Mammary epithelial cell (primary cell): ENCODE measurements at regions of chr2 and their contacts with region 1.

Region 1: GRCh38 chr2:19911799-19912509 is 10.2 kb upstream of the TTC32 start:
- DNase-seq: peak; percentile 98
- H3K4me3 ChIP-seq: no peak overlapping the region
- H3K27ac ChIP-seq: peak overlapping the region; percentile 92
- H3K4me1 ChIP-seq: peaks cover 24% of the 10 kb centered on the region
- H3K27me3 ChIP-seq: no peaks in the 10 kb centered on the region
- CTCF ChIP-seq: no peak

Region 2: GRCh38 chr2:19187323-19188020 is 724.5 kb before region 1 on chr2:
- CTCF ChIA-PET with region 1: no interaction called
- dilution Hi-C with region 1: no loop called
- in situ Hi-C with region 1: no loop called
- intact Hi-C with region 1: no loop called
- DNase-seq: peak; percentile 95
- H3K4me3 ChIP-seq: no peak overlapping the region
- H3K27ac ChIP-seq: peak overlapping the region; percentile 59
- H3K4me1 ChIP-seq: peaks cover 32% of the 10 kb centered on the region
- H3K27me3 ChIP-seq: no peaks in the 10 kb centered on the region
- CTCF ChIP-seq: no peak

Region 3: GRCh38 chr2:19901442-19902215 is 10.3 kb before region 1 on chr2 and contains the start of gene TTC32:
- CTCF ChIA-PET with region 1: no interaction called
- dilution Hi-C with region 1: no loop called
- in situ Hi-C with region 1: no loop called
- intact Hi-C with region 1: loop called (anchors 1 kb)
- DNase-seq: peak; percentile 95
- H3K4me3 ChIP-seq: peak within 1 kb of the TSS; percentile 92 to 94 (median 93)
- H3K27ac ChIP-seq: peak within 1 kb of the TSS; percentile 97
- H3K4me1 ChIP-seq: peaks cover 23% of the 10 kb centered on the region
- H3K27me3 ChIP-seq: no peaks in the 10 kb centered on the region
- CTCF ChIP-seq: no peak
- total RNA-seq, gene TTC32: 8.0 to 12.5 TPM

Region 4: DNA sequence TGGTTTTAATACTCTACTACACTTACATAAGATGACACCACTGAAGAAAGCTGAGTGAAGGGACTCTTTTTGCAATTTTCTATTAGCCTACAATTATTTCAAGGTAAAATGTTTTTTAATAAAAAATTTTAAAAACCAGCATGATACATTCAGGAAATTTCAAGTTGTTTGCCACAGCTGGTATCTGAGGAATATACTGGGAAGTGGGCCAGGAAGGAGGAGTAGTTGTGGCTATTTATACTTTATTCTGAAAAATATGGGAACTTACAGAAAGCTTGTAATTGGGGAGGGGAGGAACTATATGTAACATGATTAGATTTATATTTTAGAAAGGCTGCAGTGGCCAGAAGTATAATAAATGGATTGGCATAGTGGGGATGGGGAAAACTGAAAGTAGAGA is 37.1 kb after region 1 on chr2:
- CTCF ChIA-PET with region 1: no interaction called
- dilution Hi-C with region 1: loop called (anchors 5 kb)
- in situ Hi-C with region 1: no loop called
- intact Hi-C with region 1: no loop called
- DNase-seq: no peak
- H3K4me3 ChIP-seq: no peak overlapping the region
- H3K27ac ChIP-seq: no peak overlapping the region
- H3K4me1 ChIP-seq: no peaks in the 10 kb centered on the region
- H3K27me3 ChIP-seq: no peaks in the 10 kb centered on the region
- CTCF ChIP-seq: no peak